GM13976 (cell line): ENCODE measurements at regions of chr2 and their contacts with region 1.

Region 1: DNA sequence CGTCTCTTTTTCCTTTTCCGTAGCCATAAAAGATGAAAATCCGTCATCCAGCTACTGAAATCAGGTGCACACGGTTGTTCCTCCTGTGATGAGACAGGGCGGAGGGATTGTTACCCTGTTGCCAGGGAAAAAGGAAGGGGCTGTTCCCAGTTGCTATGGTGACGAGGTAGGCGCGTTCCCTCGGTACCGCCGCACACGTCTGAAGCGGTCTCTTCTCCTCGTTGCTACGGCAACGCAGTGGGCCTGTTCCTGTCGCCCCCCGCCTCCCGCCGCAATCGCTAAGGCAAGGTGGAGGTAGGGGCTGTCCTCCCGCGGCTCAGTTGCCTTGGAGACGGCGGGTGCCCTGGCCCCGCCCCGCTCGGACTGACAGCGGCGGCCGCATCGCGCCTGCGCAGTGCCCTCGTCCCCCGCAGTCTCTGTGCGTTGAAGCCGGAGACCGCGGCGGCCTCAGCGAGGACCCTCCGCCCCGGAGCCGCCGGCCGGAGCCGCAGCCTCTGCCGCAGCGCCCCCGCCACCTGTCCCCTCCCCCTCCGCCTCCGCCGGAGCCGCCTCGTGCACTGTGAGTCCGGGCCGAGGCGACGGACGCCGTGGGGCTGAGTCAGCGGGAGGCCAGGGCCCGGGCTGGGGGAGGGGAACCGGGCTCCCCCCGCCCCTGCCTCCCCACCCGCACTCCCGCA is at the start of gene MAPRE3:
- DNase-seq: peak; percentile 96
- CTCF ChIP-seq: no peak

Region 2: DNA sequence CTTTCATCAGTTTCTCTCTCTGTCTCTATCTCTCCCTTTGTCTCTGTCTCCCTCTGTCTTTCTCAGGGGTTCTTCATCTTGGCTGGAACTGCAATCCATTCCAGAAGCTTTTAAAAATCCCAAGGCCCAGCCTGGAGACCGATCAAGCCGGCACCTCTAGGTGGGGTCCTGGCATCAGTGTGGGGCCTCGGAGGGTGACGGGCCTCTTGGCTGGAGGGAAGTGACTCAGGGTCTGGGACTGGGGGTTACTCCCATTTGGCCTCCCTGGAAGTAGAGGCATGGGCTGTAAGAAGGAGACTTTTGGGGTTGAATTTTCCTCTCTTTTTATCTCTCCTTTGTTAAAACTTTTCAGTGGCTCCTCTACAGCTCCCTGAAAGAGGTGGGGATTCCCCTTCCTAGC is 439.7 kb before region 1 on chr2:
- in situ Hi-C with region 1: no loop called
- DNase-seq: no peak
- CTCF ChIP-seq: no peak

Region 3: GRCh38 chr2:26792720-26793119 is 177.7 kb before region 1 on chr2:
- in situ Hi-C with region 1: no loop called
- DNase-seq: no peak
- CTCF ChIP-seq: no peak

Region 4: DNA sequence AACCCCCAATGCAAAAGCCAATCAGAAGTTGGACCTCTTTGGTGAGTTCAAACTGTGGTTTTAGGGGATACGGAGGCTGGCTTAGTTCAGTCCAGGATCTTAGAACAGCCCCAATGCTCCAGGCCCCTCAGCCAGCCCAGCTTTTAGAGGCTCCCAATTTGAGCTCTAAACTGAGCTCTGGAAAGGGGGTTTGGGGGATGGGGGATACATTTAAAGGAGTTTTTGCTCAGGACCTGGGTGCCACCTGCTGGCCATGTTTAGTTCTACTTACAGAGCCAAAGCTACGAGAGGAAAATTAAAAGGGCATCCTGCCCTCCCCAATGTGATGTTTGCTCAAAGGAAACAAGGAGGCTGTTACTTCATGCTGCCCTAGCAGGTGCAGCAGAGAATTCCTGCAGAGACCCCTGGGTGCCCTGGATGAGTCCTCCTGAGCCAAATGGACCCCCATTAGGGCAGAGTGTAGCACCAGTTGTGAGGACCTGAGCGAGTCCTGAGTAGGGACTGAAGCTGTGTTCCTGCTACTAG is 46.5 kb after region 1 on chr2:
- in situ Hi-C with region 1: loop called (anchors 10 kb)
- DNase-seq: peak; percentile 70
- CTCF ChIP-seq: peak; percentile 33

Region 5: GRCh38 chr2:27086090-27086723 is 115.8 kb after region 1 on chr2:
- in situ Hi-C with region 1: no loop called
- DNase-seq: peak; percentile 99
- CTCF ChIP-seq: peak; percentile 98

Region 6: GRCh38 chr2:27191053-27191829 is 220.9 kb after region 1 on chr2:
- in situ Hi-C with region 1: loop called (anchors 25 kb)
- DNase-seq: peak; percentile 75
- CTCF ChIP-seq: peak; percentile 70

Region 7: DNA sequence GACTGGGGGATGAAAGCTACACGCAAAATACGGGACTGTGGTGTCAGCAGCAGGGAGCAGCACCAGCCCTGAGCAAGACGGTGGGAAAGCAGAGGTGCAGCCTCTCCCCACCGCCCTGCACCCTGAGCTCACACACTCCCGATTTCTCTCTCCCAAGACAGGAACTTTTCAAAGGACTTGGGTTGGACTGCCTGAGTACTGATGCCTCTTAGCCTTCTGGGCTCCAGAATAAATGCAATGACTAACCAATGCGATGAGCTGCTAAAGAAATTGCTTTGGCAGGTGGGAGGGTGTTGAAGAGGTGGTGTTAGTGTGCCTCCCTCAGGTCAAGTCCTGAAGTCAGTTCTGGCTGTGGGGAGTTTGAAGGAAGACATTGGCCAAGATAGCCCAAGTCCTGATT is 321.5 kb after region 1 on chr2:
- in situ Hi-C with region 1: loop called (anchors 25 kb)
- DNase-seq: no peak
- CTCF ChIP-seq: no peak